ENCODE measurements at regions of chr12 and their contacts with region 1.

Region 1: DNA sequence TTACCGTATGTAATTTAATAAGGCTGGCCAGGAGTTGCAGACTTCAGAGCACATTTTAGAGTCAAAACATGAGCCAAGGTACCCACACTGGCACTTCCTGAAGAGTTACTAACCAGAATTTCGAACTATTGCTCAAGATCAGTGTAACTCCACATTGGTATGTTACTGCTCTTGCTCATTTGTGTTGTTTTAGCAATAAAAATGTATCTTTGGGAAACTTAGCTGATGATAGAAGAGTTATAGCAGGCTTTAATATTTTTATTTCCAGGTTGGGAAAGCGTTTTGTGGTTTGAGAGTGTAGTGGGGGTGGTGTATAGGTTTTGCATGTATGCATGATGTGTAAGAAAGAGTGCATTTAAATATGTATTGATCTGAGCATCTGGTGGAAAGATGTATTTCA is 96.6 kb downstream of the SCN8A start:
- DNase-seq: no peak
- H3K4me3 ChIP-seq: no peak overlapping the region
- H3K4me3 Mint-ChIP-seq: peak overlapping the region; percentile 40
- H3K27ac Mint-ChIP-seq: peak overlapping the region; percentile 86
- H3K4me1 ChIP-seq: peaks cover 34% of the 10 kb centered on the region
- H3K4me1 Mint-ChIP-seq: peaks cover 46% of the 10 kb centered on the region
- H3K27me3 ChIP-seq: no peaks in the 10 kb centered on the region
- H3K27me3 Mint-ChIP-seq: no peaks in the 10 kb centered on the region
- CTCF ChIP-seq: no peak

Region 2: GRCh38 chr12:51814311-51815088 is 126.9 kb after region 1 on chr12:
- CTCF ChIA-PET with region 1: interaction called, 3 read pairs
- POLR2A ChIA-PET with region 1: no interaction called
- intact Hi-C with region 1: loop called (anchors 5 kb)
- DNase-seq: peak; percentile 83 to 93
- H3K4me3 ChIP-seq: peak overlapping the region; percentile 66
- H3K4me3 Mint-ChIP-seq: peak overlapping the region; percentile 67
- H3K27ac Mint-ChIP-seq: peak overlapping the region; percentile 9
- H3K4me1 ChIP-seq: peaks cover 11% of the 10 kb centered on the region
- H3K4me1 Mint-ChIP-seq: peaks cover 18% of the 10 kb centered on the region
- H3K27me3 ChIP-seq: no peaks in the 10 kb centered on the region
- H3K27me3 Mint-ChIP-seq: no peaks in the 10 kb centered on the region
- CTCF ChIP-seq: peak; percentile 62 to 85

Region 3: DNA sequence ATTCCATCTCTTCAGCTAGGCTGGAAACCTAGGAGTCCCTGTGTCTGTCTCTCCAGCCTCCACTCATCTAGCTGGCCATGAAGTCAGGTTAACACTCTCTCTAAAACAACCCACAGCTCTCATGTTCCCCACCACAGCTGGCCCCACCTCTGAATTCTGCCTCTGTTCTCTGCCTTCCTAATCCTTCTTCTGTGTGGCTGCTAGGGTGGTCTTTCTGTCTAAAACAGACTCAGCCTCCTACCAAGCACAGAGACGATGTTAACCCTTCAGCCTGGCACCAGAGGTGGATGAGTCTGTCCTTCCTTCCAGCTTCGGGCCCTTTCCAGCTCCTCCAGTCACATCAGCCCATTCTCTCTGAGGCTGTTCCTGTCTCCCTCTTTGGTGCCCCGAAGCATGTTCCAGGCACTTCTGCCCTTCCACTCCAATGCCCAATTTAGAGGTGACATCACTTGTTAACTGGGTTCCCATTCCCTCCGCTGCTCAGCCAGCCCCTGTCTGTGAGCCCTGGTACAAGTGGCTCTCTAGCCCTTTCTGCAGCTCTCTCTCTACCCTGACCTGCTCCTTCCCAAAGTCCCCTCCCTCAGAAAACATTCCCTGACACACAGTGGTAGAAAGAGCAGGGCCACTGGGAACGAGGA is 151.8 kb after region 1 on chr12:
- CTCF ChIA-PET with region 1: no interaction called
- POLR2A ChIA-PET with region 1: no interaction called
- intact Hi-C with region 1: no loop called
- DNase-seq: no peak
- H3K4me3 ChIP-seq: no peak overlapping the region
- H3K4me3 Mint-ChIP-seq: no peak overlapping the region
- H3K27ac Mint-ChIP-seq: peak overlapping the region; percentile 1
- H3K4me1 ChIP-seq: peaks cover 36% of the 10 kb centered on the region
- H3K4me1 Mint-ChIP-seq: peaks cover 17% of the 10 kb centered on the region
- H3K27me3 ChIP-seq: no peaks in the 10 kb centered on the region
- H3K27me3 Mint-ChIP-seq: no peaks in the 10 kb centered on the region
- CTCF ChIP-seq: no peak

Region 4: DNA sequence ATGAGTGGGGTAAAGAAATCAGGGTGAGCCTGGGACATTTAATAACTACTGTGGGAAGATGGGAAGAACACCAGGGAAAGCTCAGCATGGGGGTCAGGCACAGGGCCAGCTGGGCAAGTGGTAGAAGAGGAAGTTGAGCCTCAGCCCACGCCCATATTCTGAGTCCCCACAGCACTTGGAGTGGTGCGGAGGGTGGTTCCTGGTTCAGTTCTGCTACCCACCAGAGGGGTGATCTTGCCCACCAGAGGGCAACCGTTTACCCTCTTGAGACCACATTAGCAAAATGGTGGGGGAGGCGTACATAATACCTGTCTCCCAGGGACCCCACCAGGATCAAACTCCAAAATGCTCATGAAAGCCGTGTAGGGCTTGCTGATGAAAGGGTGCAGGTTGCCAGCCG is 183.5 kb after region 1 on chr12:
- CTCF ChIA-PET with region 1: no interaction called
- POLR2A ChIA-PET with region 1: no interaction called
- intact Hi-C with region 1: loop called (anchors 2 kb)
- DNase-seq: no peak
- H3K4me3 ChIP-seq: no peak overlapping the region
- H3K4me3 Mint-ChIP-seq: no peak overlapping the region
- H3K27ac Mint-ChIP-seq: no peak overlapping the region
- H3K4me1 ChIP-seq: peaks cover 16% of the 10 kb centered on the region
- H3K4me1 Mint-ChIP-seq: peaks cover 29% of the 10 kb centered on the region
- H3K27me3 ChIP-seq: no peaks in the 10 kb centered on the region
- H3K27me3 Mint-ChIP-seq: no peaks in the 10 kb centered on the region
- CTCF ChIP-seq: no peak

Region 5: DNA sequence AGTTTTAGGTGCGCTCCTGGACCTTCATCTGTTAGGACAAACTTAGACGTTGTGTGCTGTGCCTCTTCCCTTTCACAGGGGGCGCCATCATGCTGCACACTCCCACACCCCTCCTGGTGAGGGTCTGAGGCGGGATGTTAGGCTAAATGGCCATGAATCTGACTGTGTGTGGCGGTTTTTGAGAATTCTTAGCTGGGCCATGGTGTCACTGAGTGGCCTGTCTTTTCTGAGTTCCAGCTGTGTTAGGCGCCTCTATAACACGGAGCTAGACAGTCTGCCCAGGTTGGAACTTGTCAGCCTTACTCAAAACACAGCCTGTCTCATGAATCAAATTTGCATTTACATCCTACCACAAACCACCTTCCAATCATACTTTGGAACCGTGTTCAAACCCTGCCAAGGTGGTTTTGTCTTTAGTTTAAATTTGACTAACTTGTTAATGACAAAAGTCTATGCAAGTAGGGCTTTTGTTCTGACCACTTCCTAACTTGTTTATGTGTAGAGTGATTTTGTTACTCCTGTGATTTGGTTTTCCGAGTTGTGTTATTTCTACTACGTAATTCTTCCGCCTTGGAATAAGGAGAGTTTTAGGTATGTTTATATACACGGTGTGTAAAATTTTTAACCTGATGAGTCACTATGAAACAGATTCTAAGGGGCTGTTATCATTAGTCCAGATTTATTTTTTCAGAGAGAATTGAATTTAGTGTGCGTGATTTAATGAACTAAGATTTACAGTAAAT is 283.5 kb after region 1 on chr12:
- CTCF ChIA-PET with region 1: no interaction called
- POLR2A ChIA-PET with region 1: no interaction called
- intact Hi-C with region 1: no loop called
- DNase-seq: peak; percentile 53 to 62
- H3K4me3 ChIP-seq: no peak overlapping the region
- H3K4me3 Mint-ChIP-seq: no peak overlapping the region
- H3K27ac Mint-ChIP-seq: peak overlapping the region; percentile 10
- H3K4me1 ChIP-seq: peaks cover 69% of the 10 kb centered on the region
- H3K4me1 Mint-ChIP-seq: peaks cover 56% of the 10 kb centered on the region
- H3K27me3 ChIP-seq: no peaks in the 10 kb centered on the region
- H3K27me3 Mint-ChIP-seq: no peaks in the 10 kb centered on the region
- CTCF ChIP-seq: peak; percentile 68 to 74